Activated T-helper 1 cell treated with anti-CD3 and anti-CD28 coated beads, Interleukin-12 subunit alpha, Interleukin-12 subunit beta, Interleukin-2, Interleukin-4 antibody, amounts not matched to agents 30 ng/mL and 10 ng/mL and 1 ng/mL, durations not matched to agents 14 hours and 24 hours and 36 hours (primary cell): ENCODE measurements at regions of chr11 and their contacts with region 1.

Region 1: GRCh38 chr11:36265793-36266628 is 23.2 kb downstream of the COMMD9 start:
- DNase-seq: peak; percentile 26
- H3K4me3 Mint-ChIP-seq: no peak overlapping the region
- H3K27ac Mint-ChIP-seq: no peak overlapping the region
- H3K4me1 Mint-ChIP-seq: no peaks in the 10 kb centered on the region
- H3K27me3 Mint-ChIP-seq: peaks cover 20% of the 10 kb centered on the region

Region 2: GRCh38 chr11:35485656-35486322 is 780.2 kb before region 1 on chr11:
- intact Hi-C with region 1: loop called (anchors 5 kb)
- DNase-seq: peak; percentile 34
- H3K4me3 Mint-ChIP-seq: no peak overlapping the region
- H3K27ac Mint-ChIP-seq: no peak overlapping the region
- H3K4me1 Mint-ChIP-seq: no peaks in the 10 kb centered on the region
- H3K27me3 Mint-ChIP-seq: peaks cover 20% of the 10 kb centered on the region

Region 3: GRCh38 chr11:35822815-35823495 is 443.1 kb before region 1 on chr11:
- intact Hi-C with region 1: loop called (anchors 1 kb)
- DNase-seq: no peak
- H3K4me3 Mint-ChIP-seq: no peak overlapping the region
- H3K27ac Mint-ChIP-seq: no peak overlapping the region
- H3K4me1 Mint-ChIP-seq: no peaks in the 10 kb centered on the region
- H3K27me3 Mint-ChIP-seq: peaks cover 2% of the 10 kb centered on the region

Region 4: DNA sequence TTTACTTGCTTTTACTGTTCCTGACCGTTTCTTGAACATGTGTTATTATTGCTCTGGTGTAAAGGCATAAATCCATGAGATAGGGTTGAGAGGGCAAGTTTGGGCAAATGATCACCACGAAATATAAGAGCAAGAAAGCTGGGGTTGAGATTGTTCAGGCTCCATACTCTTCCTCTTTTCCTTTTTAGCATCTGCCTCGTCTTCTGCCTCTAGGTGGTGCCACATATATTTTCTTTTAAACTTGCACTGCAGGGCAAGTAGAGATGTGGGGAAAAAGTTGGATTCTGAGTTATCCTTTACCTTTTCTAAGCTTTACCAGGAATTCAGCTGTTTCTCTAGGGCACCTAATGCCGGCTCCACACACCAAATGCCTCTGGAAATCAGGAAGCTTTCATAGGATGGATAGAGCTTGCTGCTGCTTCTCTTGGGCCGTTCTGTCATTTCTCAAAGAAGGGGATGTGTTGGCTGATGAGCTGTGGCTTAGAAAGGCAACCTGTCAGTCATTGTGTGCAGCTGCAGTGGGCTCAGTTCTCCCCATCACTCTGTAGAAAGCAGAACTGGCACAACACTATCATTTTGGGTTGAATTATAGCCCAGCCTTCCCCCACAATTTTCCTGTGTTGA is 223.9 kb before region 1 on chr11:
- intact Hi-C with region 1: loop called (anchors 1 kb)
- DNase-seq: no peak
- H3K4me3 Mint-ChIP-seq: no peak overlapping the region
- H3K27ac Mint-ChIP-seq: no peak overlapping the region
- H3K4me1 Mint-ChIP-seq: no peaks in the 10 kb centered on the region
- H3K27me3 Mint-ChIP-seq: peaks cover 9% of the 10 kb centered on the region

Region 5: GRCh38 chr11:36249246-36249645 is 16.8 kb before region 1 on chr11:
- intact Hi-C with region 1: no loop called
- DNase-seq: no peak
- H3K4me3 Mint-ChIP-seq: no peak overlapping the region
- H3K27ac Mint-ChIP-seq: no peak overlapping the region
- H3K4me1 Mint-ChIP-seq: no peaks in the 10 kb centered on the region
- H3K27me3 Mint-ChIP-seq: peaks cover 23% of the 10 kb centered on the region

Region 6: GRCh38 chr11:36574486-36574885 is 308.5 kb after region 1 on chr11:
- intact Hi-C with region 1: no loop called
- DNase-seq: no peak
- H3K4me3 Mint-ChIP-seq: no peak overlapping the region
- H3K27ac Mint-ChIP-seq: no peak overlapping the region
- H3K4me1 Mint-ChIP-seq: no peaks in the 10 kb centered on the region
- H3K27me3 Mint-ChIP-seq: peaks cover 26% of the 10 kb centered on the region